ENCODE measurements at regions of chr4 and their contacts with region 1.

Region 1: GRCh38 chr4:156594624-156595023 is 377.0 kb downstream of the PDGFC start:
- DNase-seq: peak; percentile 26 to 77 (median 48)
- H3K4me3 ChIP-seq: no peak overlapping the region
- H3K27ac ChIP-seq: peak overlapping the region in 6 of 59 donors; percentile 5 to 67 (median 24)
- H3K27me3 ChIP-seq: no peaks in the 10 kb centered on the region
- CTCF ChIP-seq: no peak

Region 2: GRCh38 chr4:156547439-156547838 is 47.2 kb before region 1 on chr4:
- intact Hi-C with region 1: no loop called
- DNase-seq: no peak
- H3K4me3 ChIP-seq: no peak overlapping the region
- H3K27ac ChIP-seq: no peak overlapping the region
- H3K27me3 ChIP-seq: no peaks in the 10 kb centered on the region
- CTCF ChIP-seq: no peak

Region 3: DNA sequence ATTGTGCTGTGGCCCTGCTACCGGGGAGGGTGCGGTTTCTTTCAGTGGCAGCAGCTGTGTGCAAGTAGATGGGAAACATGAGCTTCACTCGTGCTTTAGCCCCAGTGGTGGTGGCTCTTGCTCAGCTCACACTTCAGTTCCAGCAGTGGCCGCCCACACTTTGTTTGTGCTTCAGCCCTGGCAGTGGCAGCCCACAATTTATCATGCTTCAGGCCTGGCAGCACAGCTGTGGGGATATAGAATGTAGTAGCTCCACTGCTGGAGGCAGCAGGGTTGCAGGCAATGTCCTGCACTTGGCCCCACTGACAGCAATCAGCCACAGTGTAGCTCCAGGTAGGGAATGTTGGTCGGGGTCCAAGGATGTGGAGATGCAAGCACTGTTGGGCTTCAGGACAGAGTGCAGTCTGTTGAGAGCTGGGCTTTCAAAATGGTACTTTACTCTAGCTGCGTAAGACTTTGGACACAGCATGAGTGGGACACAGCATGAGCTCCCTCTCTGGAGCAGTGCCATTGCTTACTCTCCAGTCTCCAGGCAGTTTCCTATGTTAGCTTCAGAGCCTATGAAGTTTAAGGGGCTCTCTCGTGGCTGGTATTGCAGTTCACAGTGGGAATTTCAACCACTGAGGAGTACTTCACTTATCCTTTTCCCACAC is 36.1 kb before region 1 on chr4:
- intact Hi-C with region 1: no loop called
- DNase-seq: peak in 3 of 10 donors; percentile 9 to 62 (median 31)
- H3K4me3 ChIP-seq: no peak overlapping the region
- H3K27ac ChIP-seq: no peak overlapping the region
- H3K27me3 ChIP-seq: no peaks in the 10 kb centered on the region
- CTCF ChIP-seq: no peak

Region 4: GRCh38 chr4:156838761-156839160 is 244.1 kb after region 1 on chr4:
- intact Hi-C with region 1: no loop called
- DNase-seq: no peak
- H3K4me3 ChIP-seq: no peak overlapping the region
- H3K27ac ChIP-seq: no peak overlapping the region
- H3K27me3 ChIP-seq: no peaks in the 10 kb centered on the region
- CTCF ChIP-seq: no peak

Region 5: DNA sequence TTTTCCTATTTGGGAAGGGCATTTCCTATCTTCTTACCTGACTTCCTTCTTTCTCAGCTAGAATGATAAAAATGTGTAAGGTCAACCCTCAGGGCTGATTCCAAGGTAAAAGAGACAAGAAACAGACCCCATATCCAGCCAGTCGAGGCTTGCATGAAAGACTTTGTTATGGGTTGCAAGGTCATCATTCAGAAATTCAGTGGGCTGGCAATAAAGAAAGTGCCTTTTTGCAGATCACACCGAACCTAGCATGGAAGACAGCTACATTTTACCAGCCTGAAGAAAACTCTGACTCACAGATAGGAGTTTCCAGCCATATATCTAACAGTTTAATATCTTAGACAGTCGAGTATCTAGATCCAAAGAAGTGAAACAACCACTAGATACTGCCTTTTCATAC is 289.6 kb after region 1 on chr4:
- intact Hi-C with region 1: no loop called
- DNase-seq: no peak
- H3K4me3 ChIP-seq: no peak overlapping the region
- H3K27ac ChIP-seq: no peak overlapping the region
- H3K27me3 ChIP-seq: no peaks in the 10 kb centered on the region
- CTCF ChIP-seq: no peak

Region 6: GRCh38 chr4:157045507-157046127 is 451.0 kb after region 1 on chr4:
- intact Hi-C with region 1: loop called in 1 of 2 experiments (anchors 10 kb)
- DNase-seq: peak in 1 of 10 donors; percentile 16
- H3K4me3 ChIP-seq: no peak overlapping the region
- H3K27ac ChIP-seq: no peak overlapping the region
- H3K27me3 ChIP-seq: no peaks in the 10 kb centered on the region
- CTCF ChIP-seq: peak in 55 of 56 donors; percentile 49 to 83 (median 70)

Measured in dorsolateral prefrontal cortex (tissue), 120 donors.